Mammary epithelial cell (primary cell): ENCODE measurements at regions of chr17 and their contacts with region 1.

Region 1: DNA sequence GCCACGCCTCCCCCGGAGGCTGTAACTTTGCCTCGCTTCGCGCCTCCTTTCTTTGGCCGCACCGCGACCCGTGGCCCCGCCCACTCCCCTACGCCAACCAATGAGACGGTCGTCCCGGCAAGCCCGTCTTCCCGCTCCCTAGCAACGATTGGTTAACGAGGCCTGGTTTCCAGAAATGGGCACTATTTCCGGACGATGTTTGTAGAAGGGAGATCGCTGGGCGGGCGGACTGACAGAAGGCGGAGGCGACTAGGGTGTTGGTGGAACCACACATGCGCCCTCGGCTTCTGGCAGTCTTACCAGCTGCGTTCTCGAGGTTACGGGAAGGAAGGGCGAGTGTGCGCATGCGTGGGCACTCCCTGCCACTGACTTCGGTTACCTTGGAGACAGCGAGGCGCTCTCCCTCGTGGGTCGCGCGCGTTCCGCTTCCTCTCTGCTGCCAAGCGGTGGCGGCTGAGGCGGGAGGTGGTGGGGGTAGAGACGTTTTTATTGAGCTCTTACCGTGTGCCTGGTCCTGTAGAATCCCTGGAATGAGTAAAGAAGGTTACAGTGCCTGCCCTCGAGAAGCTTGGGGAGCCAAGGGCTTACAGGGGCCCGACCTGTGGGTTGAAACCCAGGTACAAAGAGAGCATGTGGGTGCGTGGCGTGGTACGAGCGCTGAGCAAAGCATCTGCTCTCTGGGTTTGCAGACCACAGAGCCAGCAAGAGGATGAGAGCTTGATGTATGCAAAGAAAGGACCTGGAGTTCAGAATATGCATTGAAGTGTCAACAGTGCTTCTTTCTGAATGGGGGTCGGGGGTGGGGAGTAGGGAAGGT is 500 bp upstream of the MAP3K14 start:
- DNase-seq: peak; percentile 100
- H3K4me3 ChIP-seq: peak overlapping the region; percentile 27 to 50 (median 46)
- H3K27ac ChIP-seq: peak overlapping the region; percentile 92
- H3K4me1 ChIP-seq: peaks cover 78% of the 10 kb centered on the region
- H3K27me3 ChIP-seq: no peaks in the 10 kb centered on the region
- CTCF ChIP-seq: no peak

Region 2: GRCh38 chr17:45148183-45149036 is 168.9 kb before region 1 on chr17 and contains the start of gene HEXIM1:
- CTCF ChIA-PET with region 1: no interaction called
- dilution Hi-C with region 1: no loop called
- in situ Hi-C with region 1: no loop called
- intact Hi-C with region 1: loop called (anchors 5 kb)
- DNase-seq: peak; percentile 100
- H3K4me3 ChIP-seq: peak within 1 kb of the TSS; percentile 72 to 98 (median 98)
- H3K27ac ChIP-seq: peak within 1 kb of the TSS; percentile 99
- H3K4me1 ChIP-seq: peaks cover 34% of the 10 kb centered on the region
- H3K27me3 ChIP-seq: no peaks in the 10 kb centered on the region
- CTCF ChIP-seq: no peak
- total RNA-seq, gene HEXIM1: 20.5 to 35.2 TPM

Region 3: DNA sequence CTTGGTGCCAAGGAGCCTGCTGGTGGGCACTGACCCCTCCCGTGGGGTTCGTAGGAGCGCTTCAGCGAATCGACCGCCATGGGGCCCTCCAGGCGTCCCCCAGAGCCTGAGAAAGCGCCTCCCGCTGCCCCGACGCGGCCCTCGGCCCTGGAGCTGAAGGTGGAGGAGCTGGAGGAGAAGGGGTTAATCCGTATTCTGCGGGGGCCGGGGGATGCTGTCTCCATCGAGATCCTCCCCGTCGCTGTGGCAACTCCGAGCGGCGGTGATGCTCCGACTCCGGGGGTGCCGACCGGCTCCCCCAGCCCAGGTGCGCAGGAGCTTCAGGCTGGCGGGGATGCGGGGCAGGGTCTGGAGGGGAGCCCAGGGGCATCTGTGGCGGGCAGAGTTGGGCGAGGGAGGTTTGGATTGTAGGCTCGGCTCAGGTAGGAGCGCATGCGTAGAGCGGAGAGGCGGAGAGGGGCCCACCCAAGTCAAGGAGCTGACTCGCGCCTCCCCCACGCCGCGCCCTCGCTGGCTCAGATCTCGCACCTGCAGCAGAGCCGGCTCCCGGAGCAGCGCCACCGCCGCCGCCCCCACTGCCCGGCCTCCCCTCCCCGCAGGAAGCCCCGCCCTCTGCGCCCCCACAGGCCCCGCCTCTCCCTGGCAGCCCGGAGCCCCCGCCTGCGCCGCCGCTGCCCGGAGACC is 75.8 kb before region 1 on chr17:
- CTCF ChIA-PET with region 1: interaction called, 10 read pairs
- dilution Hi-C with region 1: loop called (anchors 5 kb)
- in situ Hi-C with region 1: no loop called
- intact Hi-C with region 1: no loop called
- DNase-seq: no peak
- H3K4me3 ChIP-seq: peak overlapping the region in 1 of 3 experiments; percentile 9
- H3K27ac ChIP-seq: no peak overlapping the region
- H3K4me1 ChIP-seq: peaks cover 17% of the 10 kb centered on the region
- H3K27me3 ChIP-seq: no peaks in the 10 kb centered on the region
- CTCF ChIP-seq: no peak

Region 4: GRCh38 chr17:45277216-45277849 is 40.0 kb before region 1 on chr17:
- CTCF ChIA-PET with region 1: interaction called, 4 read pairs
- dilution Hi-C with region 1: loop called (anchors 5 kb)
- in situ Hi-C with region 1: no loop called
- intact Hi-C with region 1: loop called (anchors 2 kb)
- DNase-seq: peak; percentile 72
- H3K4me3 ChIP-seq: no peak overlapping the region
- H3K27ac ChIP-seq: no peak overlapping the region
- H3K4me1 ChIP-seq: no peaks in the 10 kb centered on the region
- H3K27me3 ChIP-seq: no peaks in the 10 kb centered on the region
- CTCF ChIP-seq: peak; percentile 79 to 83

Region 5: DNA sequence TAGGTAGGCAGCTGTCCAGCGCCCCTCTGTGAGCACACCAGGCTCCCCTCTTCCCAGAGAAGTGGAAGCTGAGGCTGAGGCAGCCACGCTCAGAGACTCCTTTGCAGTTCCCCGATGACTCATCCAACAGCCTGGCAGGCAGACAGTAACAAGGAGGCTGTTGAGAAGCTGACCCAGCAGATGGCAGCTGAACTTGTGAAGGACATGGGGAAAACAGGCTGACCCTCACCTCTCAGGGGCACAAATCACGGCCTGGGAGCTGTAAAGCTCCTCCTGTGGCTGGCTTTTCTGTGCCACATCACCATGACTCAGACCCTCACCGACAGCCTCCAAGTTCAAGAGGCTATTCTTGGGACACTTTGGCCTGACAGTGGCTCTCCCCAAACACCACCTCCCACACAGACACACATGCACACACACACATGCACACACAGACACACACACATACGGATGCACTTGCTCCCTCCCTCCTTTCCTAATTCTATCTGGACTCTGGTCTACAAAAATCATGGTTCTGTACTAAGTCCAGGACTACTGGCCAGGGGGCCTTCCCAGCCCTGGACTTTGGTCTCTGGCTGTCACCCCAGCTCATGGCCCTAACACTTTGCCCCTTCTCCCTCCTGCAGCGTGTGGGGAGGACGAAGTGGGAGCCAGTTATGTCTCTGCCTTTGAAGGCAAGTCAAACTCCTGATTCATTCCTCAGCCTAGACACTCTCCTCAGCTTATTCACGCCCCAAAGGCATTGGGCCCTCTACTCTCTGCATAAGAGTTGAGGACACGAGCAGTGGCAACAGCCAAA is 23.7 kb before region 1 on chr17:
- CTCF ChIA-PET with region 1: no interaction called
- dilution Hi-C with region 1: no loop called
- in situ Hi-C with region 1: no loop called
- intact Hi-C with region 1: loop called (anchors 2 kb)
- DNase-seq: peak; percentile 81
- H3K4me3 ChIP-seq: no peak overlapping the region
- H3K27ac ChIP-seq: no peak overlapping the region
- H3K4me1 ChIP-seq: peaks cover 53% of the 10 kb centered on the region
- H3K27me3 ChIP-seq: no peaks in the 10 kb centered on the region
- CTCF ChIP-seq: peak in 1 of 2 donors; percentile 30

Region 6: GRCh38 chr17:45371414-45372327 is 54.4 kb after region 1 on chr17:
- CTCF ChIA-PET with region 1: no interaction called
- dilution Hi-C with region 1: loop called (anchors 5 kb)
- in situ Hi-C with region 1: loop called in 1 of 2 experiments (anchors 10 kb)
- intact Hi-C with region 1: loop called (anchors 1 kb)
- DNase-seq: peak; percentile 96
- H3K4me3 ChIP-seq: peak overlapping the region in 2 of 3 experiments; percentile 8 to 30
- H3K27ac ChIP-seq: peak overlapping the region; percentile 91
- H3K4me1 ChIP-seq: peaks cover 29% of the 10 kb centered on the region
- H3K27me3 ChIP-seq: no peaks in the 10 kb centered on the region
- CTCF ChIP-seq: peak in 1 of 2 donors; percentile 7